HEK293 (cell line): ENCODE measurements at regions of chr11 and their contacts with region 1.

Region 1: DNA sequence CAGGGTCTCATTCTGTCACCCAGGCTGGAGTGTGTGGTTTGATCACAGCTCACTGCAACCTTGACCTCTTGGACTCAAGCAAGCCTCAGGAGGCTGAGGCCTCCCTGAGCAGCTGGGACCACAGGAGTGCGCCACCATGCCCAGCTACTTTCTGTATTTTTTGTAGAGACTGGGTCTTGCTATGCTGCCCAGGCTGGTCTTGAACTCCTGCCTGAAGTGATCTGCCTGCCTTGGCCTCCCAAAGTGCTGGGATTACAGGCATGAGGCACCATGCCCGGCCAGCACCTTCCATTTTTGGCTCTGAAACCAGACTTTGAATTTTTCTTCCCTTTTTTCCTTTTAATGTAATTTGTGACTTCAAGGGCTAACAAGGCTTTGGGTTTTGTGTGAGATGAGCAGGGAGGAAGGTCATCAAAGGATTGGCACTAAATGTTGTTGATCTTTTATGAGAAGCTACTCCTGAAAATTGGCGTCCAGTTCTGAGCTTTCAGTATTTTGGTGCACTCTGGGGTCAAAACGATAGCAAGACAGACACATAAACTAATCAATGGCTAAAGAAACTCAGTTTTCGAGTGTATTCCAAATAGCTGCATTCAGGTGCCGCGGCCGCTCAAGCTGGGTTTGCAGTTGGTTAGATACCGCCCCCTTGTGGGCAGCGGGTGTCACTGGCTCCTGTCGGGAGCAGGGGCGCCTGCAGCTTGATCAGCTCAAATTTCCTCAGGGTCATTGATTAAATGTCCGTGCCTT is 51.9 kb upstream of the CLMP start:
- H3K4me3 ChIP-seq: no peak overlapping the region
- H3K27ac ChIP-seq: no peak overlapping the region
- H3K4me1 ChIP-seq: no peaks in the 10 kb centered on the region
- CTCF ChIP-seq: peak; percentile 52

Region 2: DNA sequence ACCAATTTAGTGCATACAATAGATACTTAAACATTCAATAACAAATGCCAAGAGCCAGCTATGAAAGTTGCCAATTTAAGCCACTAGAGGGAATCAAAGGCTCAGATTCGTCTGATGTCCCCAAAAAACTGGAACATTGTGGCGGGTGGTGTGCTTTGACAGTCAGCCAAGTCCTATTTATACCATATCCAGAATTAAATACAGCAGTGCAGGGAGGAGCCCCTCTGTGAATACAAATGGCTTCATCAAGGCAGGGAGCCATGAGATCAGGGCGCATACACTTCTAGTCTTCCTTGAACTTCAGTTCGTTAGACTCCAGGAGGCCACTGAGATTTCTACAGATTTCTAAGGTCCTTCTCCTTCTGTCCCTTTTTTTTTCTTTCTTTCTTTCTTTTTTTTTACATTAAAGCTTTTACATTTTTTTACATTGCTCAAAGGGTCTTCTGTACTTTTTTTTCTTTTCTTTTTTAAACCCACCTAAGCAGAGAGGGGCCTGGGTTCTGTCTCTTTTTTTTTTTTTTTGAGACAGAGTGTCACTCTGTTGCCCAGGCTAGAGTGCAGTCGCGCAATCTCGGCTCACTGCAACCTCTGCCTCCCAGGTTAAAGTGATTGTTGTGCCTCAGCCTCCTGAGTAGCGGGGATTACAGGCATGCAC is 143.5 kb before region 1 on chr11:
- CTCF ChIA-PET with region 1: interaction called, 261 read pairs
- POLR2A ChIA-PET with region 1: no interaction called
- H3K4me3 ChIP-seq: no peak overlapping the region
- H3K27ac ChIP-seq: no peak overlapping the region
- H3K4me1 ChIP-seq: 0 out of 2 replicates have a peak, but pooled peaks cover 3% of the 10 kb centered on the region
- CTCF ChIP-seq: no peak; the same call in 1 of the 2 replicates

Region 3: GRCh38 chr11:123166071-123166559 is 80.8 kb before region 1 on chr11:
- CTCF ChIA-PET with region 1: interaction called, 35 read pairs
- POLR2A ChIA-PET with region 1: no interaction called
- H3K4me3 ChIP-seq: no peak overlapping the region
- H3K27ac ChIP-seq: no peak overlapping the region
- H3K4me1 ChIP-seq: no peaks in the 10 kb centered on the region
- CTCF ChIP-seq: 0 out of 2 replicates have a peak, but pooled peaks have one; percentile 20

Region 4: GRCh38 chr11:123235117-123235655 is 11.7 kb before region 1 on chr11:
- CTCF ChIA-PET with region 1: interaction called, 21 read pairs
- POLR2A ChIA-PET with region 1: no interaction called
- H3K4me3 ChIP-seq: no peak overlapping the region
- H3K27ac ChIP-seq: no peak overlapping the region
- H3K4me1 ChIP-seq: no peaks in the 10 kb centered on the region
- CTCF ChIP-seq: no peak